ENCODE measurements at regions of chr2 and their contacts with region 1.

Region 1: GRCh38 chr2:70248181-70248847 is at the start of gene TIA1:
- DNase-seq: peak; percentile 99
- H3K4me3 Mint-ChIP-seq: peak within 1 kb of the TSS; percentile 82
- H3K27ac Mint-ChIP-seq: peak within 1 kb of the TSS; percentile 86
- H3K4me1 Mint-ChIP-seq: peaks cover 15% of the 10 kb centered on the region
- H3K27me3 Mint-ChIP-seq: no peaks in the 10 kb centered on the region
- CTCF ChIP-seq: no peak
- total RNA-seq, gene TIA1: 75.7 and 83.9 TPM in 2 replicates

Region 2: DNA sequence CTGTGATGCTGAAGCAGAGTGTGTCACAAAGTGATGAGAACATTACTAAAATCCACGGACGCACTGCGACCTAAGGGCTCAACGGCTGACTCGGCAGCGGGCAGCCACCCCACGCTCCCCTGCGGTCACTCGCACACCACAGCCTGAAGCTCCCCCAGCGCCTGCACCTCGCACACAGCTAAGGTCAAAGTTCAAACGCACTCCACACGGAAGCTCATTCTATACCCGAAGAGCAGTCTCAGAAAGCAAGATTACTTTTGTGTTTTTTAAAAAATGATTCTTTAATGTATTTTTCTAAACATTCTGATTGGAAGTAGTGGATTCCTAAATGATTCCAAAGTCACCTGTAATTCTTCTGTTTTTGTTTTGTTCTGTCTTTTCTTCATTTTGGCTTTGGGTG is 308.6 kb before region 1 on chr2:
- CTCF ChIA-PET with region 1: no interaction called
- POLR2A ChIA-PET with region 1: no interaction called
- intact Hi-C with region 1: no loop called
- DNase-seq: no peak
- H3K4me3 Mint-ChIP-seq: no peak overlapping the region
- H3K27ac Mint-ChIP-seq: no peak overlapping the region
- H3K4me1 Mint-ChIP-seq: peaks cover 17% of the 10 kb centered on the region
- H3K27me3 Mint-ChIP-seq: no peaks in the 10 kb centered on the region
- CTCF ChIP-seq: no peak

Region 3: DNA sequence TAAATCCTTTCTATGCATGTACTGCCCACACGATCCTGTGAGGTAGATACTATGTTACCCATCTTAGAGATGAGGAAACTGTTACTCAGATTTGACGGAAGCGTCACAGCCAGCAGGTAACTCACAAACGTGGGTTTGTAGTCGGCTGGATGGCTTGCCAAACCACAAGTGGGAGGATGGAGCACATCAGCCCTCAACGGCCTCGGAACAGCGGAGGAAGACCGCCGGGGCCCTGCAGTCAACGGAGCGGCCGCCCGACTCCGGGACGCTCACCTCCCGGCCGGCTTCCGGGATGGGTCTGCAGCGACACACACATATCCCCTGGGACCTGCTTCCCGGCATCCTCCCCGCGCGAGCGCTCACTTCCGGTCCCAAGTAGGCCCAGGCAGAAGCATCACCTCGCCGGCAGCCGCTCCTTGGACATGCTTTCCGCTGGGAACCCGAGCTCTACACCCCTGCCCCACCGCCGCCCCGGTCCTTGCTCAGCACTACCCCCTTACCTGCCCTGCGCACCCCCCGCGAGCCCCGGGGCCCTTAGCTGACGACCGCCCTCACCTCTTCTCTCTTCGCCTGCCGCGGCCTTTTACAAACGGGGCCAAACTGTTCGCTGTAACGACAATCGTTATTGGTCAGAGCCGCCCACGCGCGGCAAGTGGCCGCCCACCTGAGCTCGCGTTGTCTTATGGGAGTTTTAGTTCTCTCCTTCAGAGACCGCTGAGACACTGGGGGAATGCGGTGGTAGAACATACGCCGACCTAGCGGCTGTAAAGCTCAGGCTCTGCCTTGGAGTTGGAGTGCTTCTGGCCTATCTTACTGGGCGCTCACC is 57.7 kb before region 1 on chr2 and contains the start of gene C2orf42:
- CTCF ChIA-PET with region 1: interaction called, 5 read pairs
- POLR2A ChIA-PET with region 1: interaction called, 15 read pairs
- intact Hi-C with region 1: loop called (anchors 1 kb)
- DNase-seq: peak; percentile 97
- H3K4me3 Mint-ChIP-seq: peak within 1 kb of the TSS; percentile 80
- H3K27ac Mint-ChIP-seq: peak within 1 kb of the TSS; percentile 97
- H3K4me1 Mint-ChIP-seq: peaks cover 5% of the 10 kb centered on the region
- H3K27me3 Mint-ChIP-seq: no peaks in the 10 kb centered on the region
- CTCF ChIP-seq: no peak
- total RNA-seq, gene C2orf42: 17.6 and 28.5 TPM in 2 replicates

Measured in MCF 10A (cell line).